ENCODE measurements at regions of chr16 and their contacts with region 1.

Region 1: GRCh38 chr16:55955845-55956244 is 80.7 kb upstream of the CES5A start:
- DNase-seq: no peak
- H3K4me3 ChIP-seq: no peak overlapping the region
- CTCF ChIP-seq: no peak

Region 2: GRCh38 chr16:55944377-55944802 is 11.5 kb before region 1 on chr16:
- CTCF ChIA-PET with region 1: interaction called, 36 read pairs
- POLR2A ChIA-PET with region 1: no interaction called
- DNase-seq: no peak
- H3K4me3 ChIP-seq: no peak overlapping the region
- CTCF ChIP-seq: peak; percentile 95

Region 3: GRCh38 chr16:55968221-55968620 is 12.4 kb after region 1 on chr16:
- CTCF ChIA-PET with region 1: no interaction called
- POLR2A ChIA-PET with region 1: no interaction called
- DNase-seq: no peak
- H3K4me3 ChIP-seq: no peak overlapping the region
- CTCF ChIP-seq: no peak

Region 4: DNA sequence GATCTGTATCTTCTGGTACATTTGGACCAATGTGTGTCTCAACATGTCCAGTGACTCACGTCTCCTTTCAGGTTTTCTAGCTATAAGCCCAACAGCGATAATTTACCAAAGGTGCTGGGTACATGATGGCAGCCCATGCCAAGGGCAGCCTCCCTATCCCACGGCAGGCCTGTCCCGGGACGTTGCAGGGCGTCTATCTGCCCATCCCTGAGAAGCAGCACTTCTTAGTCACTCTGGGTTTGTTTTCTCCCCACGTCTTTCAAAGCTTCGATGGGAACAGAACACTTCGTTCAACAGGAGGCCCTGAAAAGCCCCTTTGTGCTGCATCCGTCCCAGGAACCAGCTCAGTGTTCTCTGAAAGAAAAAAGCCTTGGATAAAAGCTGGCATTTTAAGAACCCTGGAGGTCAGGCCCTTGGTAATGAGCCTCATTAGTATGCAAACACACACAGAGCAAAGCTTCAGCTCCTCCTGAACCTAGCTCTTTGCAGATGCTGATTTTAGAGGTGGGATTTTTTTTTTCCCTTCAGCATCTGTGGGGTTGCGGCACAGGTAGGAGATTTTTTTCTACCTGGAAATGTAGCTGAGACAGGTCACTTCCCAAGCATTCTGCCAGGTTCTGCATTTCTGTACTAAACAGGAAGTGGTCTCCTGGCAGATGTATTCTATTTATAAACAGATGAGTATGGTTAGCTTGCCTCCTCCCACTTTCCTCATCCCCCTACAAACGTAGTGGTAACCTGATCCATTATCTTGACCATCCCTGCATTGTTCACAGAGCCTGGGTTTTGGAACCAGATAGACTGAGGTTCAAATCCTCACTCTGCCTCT is 591.5 kb after region 1 on chr16:
- CTCF ChIA-PET with region 1: no interaction called
- POLR2A ChIA-PET with region 1: no interaction called
- DNase-seq: peak; percentile 14
- H3K4me3 ChIP-seq: no peak overlapping the region
- CTCF ChIP-seq: no peak